Caco-2 (cell line): ENCODE measurements at regions of chr19 and their contacts with region 1.

Region 1: DNA sequence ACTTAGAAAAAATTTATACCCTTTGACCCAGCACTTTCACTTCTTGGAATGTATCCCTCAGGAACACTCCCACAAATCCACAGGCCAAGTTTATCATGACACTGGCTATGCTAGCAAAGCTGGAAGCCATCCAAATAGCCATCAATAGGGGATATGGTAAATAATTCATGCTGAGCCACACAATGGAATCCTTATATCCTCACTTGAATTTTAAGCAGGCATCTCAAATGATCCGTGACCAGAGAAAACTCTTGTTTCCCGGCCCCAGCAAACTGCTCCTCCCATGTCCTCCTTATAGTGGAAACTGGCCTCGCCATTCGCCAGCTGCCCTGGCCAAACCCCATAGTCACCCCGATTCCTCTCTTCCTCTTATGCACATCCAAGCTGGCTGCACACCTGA is 37.6 kb downstream of the GRIK5 start:
- DNase-seq: no peak
- H3K4me3 ChIP-seq: no peak overlapping the region
- H3K4me3 Mint-ChIP-seq: no peak overlapping the region
- H3K27ac Mint-ChIP-seq: no peak overlapping the region
- H3K4me1 ChIP-seq: no peaks in the 10 kb centered on the region
- H3K4me1 Mint-ChIP-seq: no peaks in the 10 kb centered on the region
- H3K27me3 ChIP-seq: peaks cover 2% of the 10 kb centered on the region; the same call in 1 of the 2 replicates
- H3K27me3 Mint-ChIP-seq: peaks cover 4% of the 10 kb centered on the region
- CTCF ChIP-seq: no peak

Region 2: GRCh38 chr19:41959056-41960053 is 73.1 kb before region 1 on chr19 and contains the start of gene RABAC1:
- CTCF ChIA-PET with region 1: interaction called, 16 read pairs
- POLR2A ChIA-PET with region 1: no interaction called
- intact Hi-C with region 1: no loop called
- DNase-seq: peak; percentile 93 to 95
- H3K4me3 ChIP-seq: peak within 1 kb of the TSS; percentile 82
- H3K4me3 Mint-ChIP-seq: peak within 1 kb of the TSS; percentile 78
- H3K27ac Mint-ChIP-seq: peak within 1 kb of the TSS; percentile 81
- H3K4me1 ChIP-seq: peaks cover 14% of the 10 kb centered on the region
- H3K4me1 Mint-ChIP-seq: peaks cover 13% of the 10 kb centered on the region
- H3K27me3 ChIP-seq: no peaks in the 10 kb centered on the region
- H3K27me3 Mint-ChIP-seq: no peaks in the 10 kb centered on the region
- CTCF ChIP-seq: peak in 1 of 2 experiments; percentile 44
- total RNA-seq, gene RABAC1: 64.4 and 70.7 TPM in 2 replicates

Region 3: DNA sequence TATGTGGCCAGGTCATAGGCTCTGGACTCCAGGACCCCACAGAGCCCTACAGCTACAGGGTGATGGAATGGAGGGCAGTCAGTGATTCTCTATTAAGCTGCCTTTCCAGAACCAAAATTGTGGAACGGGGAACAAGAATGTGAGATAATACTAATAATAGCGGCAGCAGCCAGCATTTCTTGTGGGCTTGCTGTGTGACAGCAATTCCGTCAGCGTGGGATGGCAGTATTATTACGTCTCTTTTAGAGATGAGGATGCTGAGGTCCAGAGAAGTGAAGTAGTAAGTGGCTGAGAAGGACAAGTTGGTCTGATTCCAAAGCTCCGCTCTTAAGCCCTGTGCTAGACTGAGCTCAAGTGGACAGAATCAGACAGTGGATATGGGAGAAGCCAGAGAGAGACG is 13.1 kb after region 1 on chr19:
- CTCF ChIA-PET with region 1: interaction called, 10 read pairs
- POLR2A ChIA-PET with region 1: no interaction called
- intact Hi-C with region 1: no loop called
- DNase-seq: no peak
- H3K4me3 ChIP-seq: no peak overlapping the region
- H3K4me3 Mint-ChIP-seq: no peak overlapping the region
- H3K27ac Mint-ChIP-seq: no peak overlapping the region
- H3K4me1 ChIP-seq: no peaks in the 10 kb centered on the region
- H3K4me1 Mint-ChIP-seq: peaks cover 8% of the 10 kb centered on the region
- H3K27me3 ChIP-seq: no peaks in the 10 kb centered on the region
- H3K27me3 Mint-ChIP-seq: peaks cover 11% of the 10 kb centered on the region
- CTCF ChIP-seq: no peak